ENCODE measurements at regions of chr1 and their contacts with region 1.

Region 1: DNA sequence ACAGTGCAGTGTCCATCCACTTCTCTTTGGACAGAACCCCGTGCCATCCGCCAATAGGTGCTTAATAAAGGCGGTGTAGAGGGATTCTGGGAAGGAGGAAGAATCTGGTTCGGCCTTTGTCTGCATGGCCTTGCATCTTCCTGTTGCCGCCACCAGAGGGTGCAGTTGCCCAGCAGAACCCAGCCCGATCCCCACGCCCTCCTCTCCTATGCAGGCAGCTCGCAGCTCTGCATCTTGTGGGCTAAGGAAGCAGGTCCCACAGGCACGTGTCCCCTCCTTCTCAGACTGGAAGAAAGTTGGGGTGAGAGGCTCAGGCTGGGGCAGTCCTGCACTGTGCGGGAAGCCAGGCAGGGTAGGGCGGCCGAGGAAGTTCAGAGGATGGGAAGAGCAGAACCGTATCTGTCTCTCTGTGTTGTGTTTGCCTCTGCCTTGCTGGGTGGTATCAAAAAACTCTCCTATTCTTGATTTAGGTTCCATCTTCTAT is 20.8 kb downstream of the NAV1 start:
- DNase-seq: peak; percentile 78 to 79
- H3K4me3 ChIP-seq: no peak overlapping the region
- H3K27ac ChIP-seq: no peak overlapping the region
- H3K4me1 ChIP-seq: peaks cover 0 to 54% of the 10 kb centered on the region in 2 donors
- H3K27me3 ChIP-seq: no peaks in the 10 kb centered on the region
- CTCF ChIP-seq: peak; percentile 90 to 99 (median 96)
- POLR2A ChIP-seq: no peak

Region 2: DNA sequence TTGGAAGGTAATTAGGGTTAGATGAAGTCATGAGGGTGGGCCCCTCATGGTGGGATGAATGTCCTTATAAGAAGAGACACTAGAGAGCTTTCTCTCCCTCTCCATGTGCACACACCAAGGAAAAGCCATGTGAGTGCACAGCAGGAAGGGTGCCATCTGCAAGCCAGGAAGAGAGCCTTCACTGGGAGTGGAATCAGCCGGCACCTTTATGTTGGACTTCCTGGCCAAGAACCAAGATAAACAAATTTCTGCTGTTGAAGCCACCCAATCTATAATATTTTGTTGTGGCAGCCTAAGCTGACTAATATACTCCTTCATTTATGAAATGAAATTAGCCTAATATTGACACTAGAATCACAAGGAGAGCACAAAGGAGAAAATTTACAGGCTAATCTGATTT is 314.6 kb before region 1 on chr1:
- intact Hi-C with region 1: no loop called
- DNase-seq: no peak
- H3K4me3 ChIP-seq: no peak overlapping the region
- H3K27ac ChIP-seq: no peak overlapping the region
- H3K4me1 ChIP-seq: no peaks in the 10 kb centered on the region
- H3K27me3 ChIP-seq: no peaks in the 10 kb centered on the region
- CTCF ChIP-seq: no peak
- POLR2A ChIP-seq: no peak

Region 3: GRCh38 chr1:201703621-201704439 is 144.1 kb after region 1 on chr1:
- intact Hi-C with region 1: loop called (anchors 1 kb)
- DNase-seq: peak; percentile 85 to 89
- H3K4me3 ChIP-seq: no peak overlapping the region
- H3K27ac ChIP-seq: peak overlapping the region; percentile 16 to 81 (median 18)
- H3K4me1 ChIP-seq: peaks cover 9 to 16% of the 10 kb centered on the region in 2 donors
- H3K27me3 ChIP-seq: no peaks in the 10 kb centered on the region
- CTCF ChIP-seq: peak; percentile 89 to 98 (median 95)
- POLR2A ChIP-seq: no peak

Region 4: GRCh38 chr1:201792534-201793305 is 233.0 kb after region 1 on chr1:
- intact Hi-C with region 1: loop called (anchors 5 kb)
- DNase-seq: peak; percentile 79 to 82
- H3K4me3 ChIP-seq: no peak overlapping the region
- H3K27ac ChIP-seq: peak overlapping the region in 2 of 3 donors; percentile 56 to 58
- H3K4me1 ChIP-seq: peaks cover 0 to 34% of the 10 kb centered on the region in 2 donors
- H3K27me3 ChIP-seq: no peaks in the 10 kb centered on the region
- CTCF ChIP-seq: peak; percentile 93 to 99 (median 97)
- POLR2A ChIP-seq: no peak

Measured in thyroid gland (tissue), 4 donors.